Esophagus muscularis mucosa (tissue), 4 donors: ENCODE measurements at regions of chr5 and their contacts with region 1.

Region 1: GRCh38 chr5:137954131-137954879 is 65.0 kb downstream of the PKD2L2 start:
- DNase-seq: no peak
- H3K4me3 ChIP-seq: peak overlapping the region in 3 of 4 donors; percentile 25 to 27 (median 26)
- H3K27ac ChIP-seq: peak overlapping the region; percentile 72 to 81 (median 73)
- H3K4me1 ChIP-seq: peaks cover 8 to 51% (median 39%) of the 10 kb centered on the region in 4 donors
- H3K27me3 ChIP-seq: no peaks in the 10 kb centered on the region
- CTCF ChIP-seq: no peak
- EP300 ChIP-seq: no peak
- POLR2A ChIP-seq: no peak

Region 2: GRCh38 chr5:138000102-138000723 is 45.9 kb after region 1 on chr5:
- intact Hi-C with region 1: loop called (anchors 10 kb)
- DNase-seq: no peak
- H3K4me3 ChIP-seq: no peak overlapping the region
- H3K27ac ChIP-seq: peak overlapping the region in 3 of 4 donors; percentile 15 to 56 (median 43)
- H3K4me1 ChIP-seq: peaks cover 6 to 51% (median 40%) of the 10 kb centered on the region in 4 donors
- H3K27me3 ChIP-seq: no peaks in the 10 kb centered on the region
- CTCF ChIP-seq: no peak
- EP300 ChIP-seq: no peak
- POLR2A ChIP-seq: no peak